ENCODE measurements at regions of chr3 and their contacts with region 1.

Region 1: DNA sequence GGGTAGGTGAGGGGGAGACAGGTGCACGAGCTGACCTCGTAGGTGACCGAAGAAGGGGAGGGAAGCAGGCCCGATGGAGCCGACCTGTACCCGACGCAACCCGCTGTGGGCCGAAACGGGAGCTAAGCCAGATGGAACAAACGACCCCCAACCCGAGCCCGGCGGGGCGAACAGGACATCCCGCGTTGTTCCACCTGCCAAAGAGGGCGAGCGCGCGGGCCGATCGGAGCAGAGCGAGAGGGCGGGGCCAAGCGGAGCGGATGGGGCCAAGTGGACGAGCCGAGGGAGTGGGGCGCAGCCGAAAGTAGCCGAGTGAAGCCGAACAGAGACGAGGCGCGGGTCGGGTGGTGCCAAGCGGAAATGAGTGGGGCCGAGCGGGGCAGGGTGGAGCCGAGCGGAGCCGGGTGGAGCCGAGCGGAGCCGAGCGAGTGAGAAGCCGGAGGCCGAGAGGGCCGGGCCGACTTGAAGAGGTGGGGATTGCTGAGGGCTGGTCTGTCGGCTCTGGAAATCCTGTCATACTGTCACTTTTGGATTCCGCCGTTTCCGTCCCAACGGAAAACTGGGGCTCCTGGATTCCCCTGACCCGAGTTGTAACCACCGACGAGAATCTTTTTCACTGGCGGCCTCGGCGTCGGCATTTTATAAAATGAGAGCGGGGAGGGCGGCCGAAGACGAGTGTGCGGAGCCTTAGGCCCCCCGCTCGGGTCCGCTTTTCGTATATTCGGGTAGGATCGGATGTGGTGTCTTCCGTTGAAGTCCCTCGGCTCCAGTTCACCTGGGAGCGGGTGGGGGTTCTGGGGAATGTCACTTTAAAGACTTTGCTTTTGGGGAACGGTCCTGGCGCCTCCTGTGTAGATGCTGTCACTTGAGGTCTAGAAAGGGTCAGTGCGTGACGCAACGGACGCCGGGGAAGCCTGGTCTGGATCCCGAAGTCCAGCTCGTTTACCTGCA is 15.6 kb upstream of the WNT7A start:
- DNase-seq: peak; percentile 93 to 95
- H3K4me3 ChIP-seq: peak overlapping the region; percentile 53
- H3K4me3 Mint-ChIP-seq: peak overlapping the region; percentile 85
- H3K27ac Mint-ChIP-seq: peak overlapping the region; percentile 54
- H3K4me1 ChIP-seq: no peaks in the 10 kb centered on the region
- H3K4me1 Mint-ChIP-seq: no peaks in the 10 kb centered on the region
- H3K27me3 ChIP-seq: no peaks in the 10 kb centered on the region
- H3K27me3 Mint-ChIP-seq: no peaks in the 10 kb centered on the region
- CTCF ChIP-seq: no peak

Region 2: GRCh38 chr3:13950042-13950441 is 54.6 kb after region 1 on chr3:
- CTCF ChIA-PET with region 1: interaction called, 3 read pairs
- POLR2A ChIA-PET with region 1: no interaction called
- intact Hi-C with region 1: loop called (anchors 2 kb)
- DNase-seq: no peak
- H3K4me3 ChIP-seq: no peak overlapping the region
- H3K4me3 Mint-ChIP-seq: no peak overlapping the region
- H3K27ac Mint-ChIP-seq: no peak overlapping the region
- H3K4me1 ChIP-seq: peaks cover 30% of the 10 kb centered on the region
- H3K4me1 Mint-ChIP-seq: peaks cover 11% of the 10 kb centered on the region
- H3K27me3 ChIP-seq: no peaks in the 10 kb centered on the region
- H3K27me3 Mint-ChIP-seq: no peaks in the 10 kb centered on the region
- CTCF ChIP-seq: no peak

Region 3: DNA sequence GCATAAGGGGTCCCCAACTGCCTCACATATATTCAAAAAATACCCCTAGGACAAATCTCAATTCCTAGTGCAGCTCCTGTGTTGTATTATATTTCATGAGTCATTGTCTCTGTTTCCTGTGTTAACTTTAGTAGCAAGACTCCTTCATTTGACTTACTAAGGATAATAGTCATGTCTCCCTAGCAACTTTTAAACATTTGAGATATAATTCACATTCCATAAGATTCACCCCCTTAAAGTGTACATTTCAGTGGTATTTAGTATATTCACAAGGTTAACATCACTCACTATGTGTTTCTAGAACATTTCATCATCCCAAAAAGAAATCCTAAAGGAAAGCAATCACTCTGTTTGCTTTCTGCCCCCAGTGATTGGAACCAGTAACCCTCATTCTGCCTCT is 105.7 kb after region 1 on chr3:
- CTCF ChIA-PET with region 1: no interaction called
- POLR2A ChIA-PET with region 1: no interaction called
- intact Hi-C with region 1: no loop called
- DNase-seq: no peak
- H3K4me3 ChIP-seq: no peak overlapping the region
- H3K4me3 Mint-ChIP-seq: no peak overlapping the region
- H3K27ac Mint-ChIP-seq: no peak overlapping the region
- H3K4me1 ChIP-seq: no peaks in the 10 kb centered on the region
- H3K4me1 Mint-ChIP-seq: no peaks in the 10 kb centered on the region
- H3K27me3 ChIP-seq: no peaks in the 10 kb centered on the region
- H3K27me3 Mint-ChIP-seq: no peaks in the 10 kb centered on the region
- CTCF ChIP-seq: no peak

Region 4: DNA sequence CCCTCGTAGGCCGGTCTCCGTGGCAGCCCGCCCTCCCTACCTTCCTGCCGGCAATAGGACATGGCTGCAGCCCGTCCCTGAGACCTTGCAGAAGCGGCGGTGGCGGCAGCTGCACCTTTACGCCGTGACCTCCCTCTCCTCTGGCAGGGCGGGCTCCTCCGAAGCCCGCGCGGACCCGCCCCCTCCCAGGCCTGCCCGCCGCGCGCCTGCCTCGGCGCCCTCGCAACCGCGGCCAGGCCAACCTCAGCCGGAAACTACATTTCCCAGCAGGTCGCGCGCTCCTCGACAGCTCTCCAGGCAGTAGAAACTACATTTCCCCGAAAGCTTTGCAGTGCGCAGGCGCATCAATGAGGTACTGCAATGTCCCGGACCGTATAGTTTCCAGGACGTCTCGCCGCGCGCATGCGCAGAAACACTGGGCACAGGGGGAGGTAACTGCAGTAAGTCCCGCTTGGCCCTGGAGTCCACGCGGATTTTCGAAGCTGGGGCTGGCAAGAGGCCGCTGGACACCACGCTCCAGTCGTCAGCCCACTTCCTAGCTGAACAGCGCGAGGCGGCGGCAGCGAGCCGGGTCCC is 229.3 kb after region 1 on chr3 and contains the starts of genes CHCHD4 and TMEM43:
- CTCF ChIA-PET with region 1: interaction called, 56 read pairs
- POLR2A ChIA-PET with region 1: interaction called, 3 read pairs
- intact Hi-C with region 1: loop called (anchors 2 kb)
- DNase-seq: peak; percentile 97 to 99
- H3K4me3 ChIP-seq: peak within 1 kb of the TSS; percentile 95
- H3K4me3 Mint-ChIP-seq: peak within 1 kb of the TSS; percentile 91
- H3K27ac Mint-ChIP-seq: peak within 1 kb of the TSS; percentile 94
- H3K4me1 ChIP-seq: peaks cover 12% of the 10 kb centered on the region; the same call in 1 of the 2 replicates
- H3K4me1 Mint-ChIP-seq: peaks cover 18% of the 10 kb centered on the region
- H3K27me3 ChIP-seq: no peaks in the 10 kb centered on the region
- H3K27me3 Mint-ChIP-seq: no peaks in the 10 kb centered on the region
- CTCF ChIP-seq: no peak
- total RNA-seq, gene CHCHD4: 15.3 and 15.9 TPM in 2 replicates
- total RNA-seq, gene TMEM43: 33.0 and 35.2 TPM in 2 replicates

Region 5: DNA sequence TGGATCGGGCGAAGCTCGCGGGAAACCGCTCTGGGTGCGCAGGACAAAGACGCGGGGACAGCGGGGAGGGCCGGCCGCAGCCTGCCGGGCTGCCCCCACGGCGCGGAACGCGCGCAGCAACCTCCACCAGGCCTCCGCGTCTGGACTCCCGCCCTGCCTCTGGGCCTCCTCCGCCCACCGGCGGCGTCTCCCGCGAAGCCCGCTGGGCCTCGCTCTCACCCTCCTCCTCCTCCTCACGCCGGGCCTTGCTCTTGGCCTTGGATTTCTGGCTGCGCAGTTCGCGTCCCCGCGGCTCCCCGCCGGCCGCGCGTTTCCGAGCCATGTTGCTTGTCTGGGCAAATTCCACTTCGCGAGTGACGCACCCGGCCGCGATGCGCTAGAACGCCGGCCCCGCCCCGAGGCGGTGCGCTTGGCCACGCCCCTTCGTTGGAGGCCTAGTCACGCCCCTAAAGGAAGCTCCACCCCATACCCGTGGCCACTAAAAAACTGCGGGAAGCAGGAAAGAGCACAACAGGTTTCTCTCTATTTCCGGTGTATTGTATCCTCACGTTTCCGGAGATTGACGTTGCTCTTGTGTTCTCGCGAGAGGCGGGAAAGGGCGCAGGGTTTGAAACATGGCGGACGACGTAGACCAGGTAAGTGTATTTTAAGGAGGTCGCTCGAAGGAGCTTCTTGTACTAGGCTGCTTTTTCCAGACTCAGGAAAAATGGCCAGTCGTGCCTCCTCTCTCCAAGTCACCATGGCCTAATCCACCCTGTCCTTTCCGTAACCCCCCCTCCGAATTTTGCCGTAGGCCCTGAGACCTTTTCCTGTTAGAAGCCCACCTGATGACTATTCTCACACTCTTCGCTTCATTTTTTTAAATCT is 283.1 kb after region 1 on chr3 and contains the starts of genes LSM3 and XPC:
- CTCF ChIA-PET with region 1: interaction called, 7 read pairs
- POLR2A ChIA-PET with region 1: interaction called, 4 read pairs
- intact Hi-C with region 1: loop called (anchors 1 kb)
- DNase-seq: peak; percentile 97 to 98
- H3K4me3 ChIP-seq: peak within 1 kb of the TSS; percentile 95
- H3K4me3 Mint-ChIP-seq: peak within 1 kb of the TSS; percentile 82
- H3K27ac Mint-ChIP-seq: peak within 1 kb of the TSS; percentile 94
- H3K4me1 ChIP-seq: peaks cover 16% of the 10 kb centered on the region
- H3K4me1 Mint-ChIP-seq: peaks cover 24% of the 10 kb centered on the region
- H3K27me3 ChIP-seq: no peaks in the 10 kb centered on the region
- H3K27me3 Mint-ChIP-seq: no peaks in the 10 kb centered on the region
- CTCF ChIP-seq: no peak
- total RNA-seq, gene LSM3: 19.1 and 20.5 TPM in 2 replicates
- total RNA-seq, gene XPC: 31.0 and 33.1 TPM in 2 replicates

Region 6: DNA sequence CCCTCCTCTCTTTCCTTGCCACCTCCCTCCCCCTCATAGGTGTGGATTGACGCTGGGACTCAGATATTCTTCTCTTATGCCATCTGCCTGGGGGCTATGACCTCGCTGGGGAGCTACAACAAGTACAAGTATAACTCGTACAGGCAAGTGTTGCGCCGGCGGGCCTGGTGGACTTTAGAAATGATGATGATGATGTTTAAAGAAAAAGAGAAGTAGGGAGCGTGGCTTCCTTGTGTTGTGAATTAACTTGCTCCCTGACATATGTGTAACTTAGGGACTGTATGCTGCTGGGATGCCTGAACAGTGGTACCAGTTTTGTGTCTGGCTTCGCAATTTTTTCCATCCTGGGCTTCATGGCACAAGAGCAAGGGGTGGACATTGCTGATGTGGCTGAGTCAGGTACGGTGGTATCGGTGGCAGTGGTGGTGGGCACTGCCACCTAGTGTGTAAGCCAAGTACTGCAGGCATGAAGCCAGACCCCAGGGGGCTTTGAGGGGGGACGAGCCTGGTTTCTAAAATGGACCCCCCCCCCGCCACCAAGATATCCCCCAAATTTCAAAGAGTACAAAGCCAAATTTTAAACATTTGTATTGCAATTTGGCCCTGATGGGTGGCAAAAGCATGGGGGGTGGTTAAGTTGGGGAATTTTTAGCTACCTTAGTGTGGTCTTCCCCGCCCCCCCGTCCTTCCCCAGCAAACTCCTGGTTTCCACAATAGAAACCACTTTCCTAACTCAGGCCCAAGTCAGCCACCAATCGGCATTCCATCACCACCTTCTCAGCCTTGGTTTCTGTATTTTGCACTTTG is 572.6 kb after region 1 on chr3:
- CTCF ChIA-PET with region 1: interaction called, 3 read pairs
- POLR2A ChIA-PET with region 1: no interaction called
- intact Hi-C with region 1: loop called (anchors 2 kb)
- DNase-seq: peak in 1 of 2 experiments; percentile 50
- H3K4me3 ChIP-seq: no peak overlapping the region
- H3K4me3 Mint-ChIP-seq: no peak overlapping the region
- H3K27ac Mint-ChIP-seq: no peak overlapping the region
- H3K4me1 ChIP-seq: 0 out of 2 replicates have a peak, but pooled peaks cover 5% of the 10 kb centered on the region
- H3K4me1 Mint-ChIP-seq: no peaks in the 10 kb centered on the region
- H3K27me3 ChIP-seq: no peaks in the 10 kb centered on the region
- H3K27me3 Mint-ChIP-seq: no peaks in the 10 kb centered on the region
- CTCF ChIP-seq: peak; percentile 73 to 81

Region 7: GRCh38 chr3:14587740-14588360 is 692.4 kb after region 1 on chr3:
- CTCF ChIA-PET with region 1: no interaction called
- POLR2A ChIA-PET with region 1: no interaction called
- intact Hi-C with region 1: no loop called
- DNase-seq: no peak
- H3K4me3 ChIP-seq: no peak overlapping the region
- H3K4me3 Mint-ChIP-seq: no peak overlapping the region
- H3K27ac Mint-ChIP-seq: no peak overlapping the region
- H3K4me1 ChIP-seq: peaks cover 20% of the 10 kb centered on the region
- H3K4me1 Mint-ChIP-seq: peaks cover 8% of the 10 kb centered on the region
- H3K27me3 ChIP-seq: no peaks in the 10 kb centered on the region
- H3K27me3 Mint-ChIP-seq: no peaks in the 10 kb centered on the region
- CTCF ChIP-seq: no peak

Measured in Caco-2 (cell line).